GM23248 (cell line): ENCODE measurements at regions of chr6 and their contacts with region 1.

Region 1: GRCh38 chr6:138099832-138100231 is 7.4 kb downstream of the PERP start:
- DNase-seq: peak; percentile 87
- H3K4me3 ChIP-seq: no peak overlapping the region
- H3K27ac ChIP-seq: no peak overlapping the region
- H3K4me1 ChIP-seq: peaks cover 11% of the 10 kb centered on the region
- H3K27me3 ChIP-seq: no peaks in the 10 kb centered on the region

Region 2: DNA sequence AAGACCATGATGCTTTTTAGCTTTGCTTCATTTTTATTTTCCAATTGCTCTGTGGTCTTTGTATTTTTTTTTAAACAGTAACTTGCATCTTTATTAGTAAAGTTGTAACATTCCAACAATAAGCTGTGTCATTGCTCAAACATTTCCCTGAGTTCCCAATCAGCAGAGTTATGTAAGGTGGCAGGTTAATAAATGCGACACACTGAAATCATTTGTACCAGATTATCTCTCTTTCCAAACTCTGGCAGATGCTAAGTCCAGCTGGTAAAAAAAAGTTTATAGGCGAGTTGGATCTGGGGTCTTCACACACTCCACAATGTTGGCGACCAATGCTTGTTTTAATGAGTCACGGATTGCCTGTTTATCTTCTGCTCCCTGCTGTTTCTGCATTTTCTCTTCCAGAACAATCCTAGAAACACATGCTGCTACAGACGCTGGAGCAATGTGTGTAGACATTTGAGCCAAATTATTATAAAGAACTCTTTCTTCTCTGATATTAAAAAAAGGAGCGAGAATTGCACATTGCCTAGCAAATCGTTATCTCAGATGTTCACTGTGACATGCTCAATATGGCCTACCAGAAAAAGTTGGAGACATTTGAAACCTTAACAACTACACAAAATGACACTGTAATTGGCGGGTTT is 767.1 kb before region 1 on chr6:
- in situ Hi-C with region 1: no loop called
- DNase-seq: peak; percentile 13
- H3K4me3 ChIP-seq: no peak overlapping the region
- H3K27ac ChIP-seq: no peak overlapping the region
- H3K4me1 ChIP-seq: no peaks in the 10 kb centered on the region
- H3K27me3 ChIP-seq: peaks cover 17% of the 10 kb centered on the region

Region 3: DNA sequence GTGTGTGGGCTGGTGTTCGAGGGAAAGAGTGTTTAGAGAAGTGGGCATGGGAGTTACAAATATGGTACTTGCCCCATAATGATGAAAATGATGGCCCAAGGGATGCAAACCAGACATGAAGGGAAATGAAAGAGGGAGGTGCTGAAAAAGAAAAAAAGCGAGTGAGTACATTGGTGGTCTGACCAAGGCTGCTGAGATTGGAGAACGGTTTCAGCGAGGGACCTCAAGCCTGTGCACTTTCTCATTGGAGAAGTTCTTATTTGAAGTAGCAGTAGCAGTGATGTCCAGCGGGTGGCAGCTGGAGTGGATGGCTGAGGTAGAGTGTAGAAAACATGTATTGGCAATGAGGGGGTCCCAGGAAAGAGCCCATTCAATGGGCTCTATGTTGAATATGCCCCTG is 178.0 kb before region 1 on chr6:
- in situ Hi-C with region 1: no loop called
- DNase-seq: peak; percentile 11
- H3K4me3 ChIP-seq: no peak overlapping the region
- H3K27ac ChIP-seq: no peak overlapping the region
- H3K4me1 ChIP-seq: peaks cover 18% of the 10 kb centered on the region
- H3K27me3 ChIP-seq: no peaks in the 10 kb centered on the region

Region 4: DNA sequence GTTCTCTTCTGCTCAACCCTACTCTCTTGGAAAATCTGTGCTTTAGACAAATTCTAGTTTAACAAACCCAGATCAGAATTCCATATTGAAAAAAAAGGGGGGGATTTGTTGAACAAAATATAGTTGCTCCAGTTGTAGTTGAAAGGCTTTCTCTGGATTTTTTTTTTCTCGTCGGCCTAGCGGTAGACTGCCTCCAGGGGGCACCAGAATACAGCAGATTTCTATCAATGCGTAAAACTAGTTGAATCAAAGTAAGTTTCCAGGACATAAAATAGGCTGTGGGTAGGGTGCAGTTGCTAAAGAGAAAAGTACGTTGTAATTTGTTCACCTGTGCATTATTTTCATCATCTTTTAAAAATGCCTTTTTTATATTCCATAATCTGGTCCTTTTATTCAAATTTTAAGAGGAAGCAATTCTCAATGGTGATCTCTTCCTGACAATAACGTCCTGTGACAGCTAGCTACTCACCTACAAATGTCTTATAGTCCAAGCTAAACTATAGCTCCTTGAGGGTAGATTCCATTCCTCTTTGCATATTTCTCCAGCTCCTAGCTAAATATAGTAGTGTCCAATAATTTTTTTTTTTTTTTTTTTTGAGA is 98.0 kb before region 1 on chr6:
- in situ Hi-C with region 1: loop called (anchors 5 kb)
- DNase-seq: peak; percentile 70
- H3K4me3 ChIP-seq: no peak overlapping the region
- H3K27ac ChIP-seq: no peak overlapping the region
- H3K4me1 ChIP-seq: no peaks in the 10 kb centered on the region
- H3K27me3 ChIP-seq: no peaks in the 10 kb centered on the region

Region 5: GRCh38 chr6:138155443-138155842 is 55.6 kb after region 1 on chr6:
- in situ Hi-C with region 1: no loop called
- DNase-seq: no peak
- H3K4me3 ChIP-seq: no peak overlapping the region
- H3K27ac ChIP-seq: no peak overlapping the region
- H3K4me1 ChIP-seq: no peaks in the 10 kb centered on the region
- H3K27me3 ChIP-seq: peaks cover 40% of the 10 kb centered on the region

Region 6: GRCh38 chr6:139219271-139219729 is 1119.5 kb after region 1 on chr6:
- in situ Hi-C with region 1: no loop called
- DNase-seq: peak; percentile 94
- H3K4me3 ChIP-seq: no peak overlapping the region
- H3K27ac ChIP-seq: peak overlapping the region; percentile 22; the same call in 1 of the 2 replicates
- H3K4me1 ChIP-seq: 0 out of 2 replicates have a peak, but pooled peaks cover 6% of the 10 kb centered on the region
- H3K27me3 ChIP-seq: no peaks in the 10 kb centered on the region